Heart left ventricle (tissue), 16 donors: ENCODE measurements at regions of chr17 and their contacts with region 1.

Region 1: DNA sequence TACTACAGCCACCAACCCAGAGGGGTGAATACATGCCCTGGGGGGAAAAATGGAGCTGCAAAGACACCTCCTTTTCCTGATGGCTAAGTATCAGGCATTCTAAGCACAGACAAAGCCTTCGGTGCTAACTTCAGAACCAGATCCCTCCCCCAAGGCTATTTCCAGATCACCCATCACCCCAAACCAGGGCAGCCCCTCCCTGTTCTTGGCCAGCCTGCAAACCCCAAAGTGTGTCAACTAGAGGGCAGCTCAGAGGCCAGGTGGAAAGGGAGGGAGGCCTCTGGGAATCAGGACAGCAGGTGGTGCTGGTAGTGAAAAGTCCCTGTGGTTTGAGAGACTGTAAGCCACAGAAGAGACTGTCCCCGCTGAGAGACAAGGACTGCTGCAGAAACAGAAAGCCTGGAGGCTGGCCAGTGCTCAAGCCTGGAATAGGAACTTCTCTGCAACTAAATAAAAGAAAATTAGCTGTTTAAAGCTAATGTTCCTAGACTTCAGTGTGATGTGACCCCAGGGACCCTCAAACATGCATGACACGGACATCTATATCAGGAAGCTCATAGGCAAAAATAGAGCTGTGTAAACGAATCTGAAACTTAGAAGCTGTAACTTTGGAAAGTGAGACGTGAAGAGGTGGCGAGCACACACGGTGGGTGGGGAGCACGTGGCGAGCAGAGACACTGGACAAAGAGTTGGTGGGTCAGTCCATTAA is 9.1 kb downstream of the TUBG1 start:
- DNase-seq: peak; percentile 64 to 82 (median 69)
- ATAC-seq: peak; percentile 94 to 97 (median 96)
- H3K4me3 ChIP-seq: peak overlapping the region in 5 of 12 donors; percentile 3 to 23 (median 3)
- H3K27ac ChIP-seq: peak overlapping the region in 11 of 12 donors; percentile 5 to 83 (median 69)
- H3K4me1 ChIP-seq: peaks cover 0 to 22% (median 10%) of the 10 kb centered on the region in 12 donors
- H3K27me3 ChIP-seq: no peaks in the 10 kb centered on the region
- CTCF ChIP-seq: peak in 8 of 12 donors; percentile 23 to 59 (median 35)
- POLR2A ChIP-seq: no peak

Region 2: DNA sequence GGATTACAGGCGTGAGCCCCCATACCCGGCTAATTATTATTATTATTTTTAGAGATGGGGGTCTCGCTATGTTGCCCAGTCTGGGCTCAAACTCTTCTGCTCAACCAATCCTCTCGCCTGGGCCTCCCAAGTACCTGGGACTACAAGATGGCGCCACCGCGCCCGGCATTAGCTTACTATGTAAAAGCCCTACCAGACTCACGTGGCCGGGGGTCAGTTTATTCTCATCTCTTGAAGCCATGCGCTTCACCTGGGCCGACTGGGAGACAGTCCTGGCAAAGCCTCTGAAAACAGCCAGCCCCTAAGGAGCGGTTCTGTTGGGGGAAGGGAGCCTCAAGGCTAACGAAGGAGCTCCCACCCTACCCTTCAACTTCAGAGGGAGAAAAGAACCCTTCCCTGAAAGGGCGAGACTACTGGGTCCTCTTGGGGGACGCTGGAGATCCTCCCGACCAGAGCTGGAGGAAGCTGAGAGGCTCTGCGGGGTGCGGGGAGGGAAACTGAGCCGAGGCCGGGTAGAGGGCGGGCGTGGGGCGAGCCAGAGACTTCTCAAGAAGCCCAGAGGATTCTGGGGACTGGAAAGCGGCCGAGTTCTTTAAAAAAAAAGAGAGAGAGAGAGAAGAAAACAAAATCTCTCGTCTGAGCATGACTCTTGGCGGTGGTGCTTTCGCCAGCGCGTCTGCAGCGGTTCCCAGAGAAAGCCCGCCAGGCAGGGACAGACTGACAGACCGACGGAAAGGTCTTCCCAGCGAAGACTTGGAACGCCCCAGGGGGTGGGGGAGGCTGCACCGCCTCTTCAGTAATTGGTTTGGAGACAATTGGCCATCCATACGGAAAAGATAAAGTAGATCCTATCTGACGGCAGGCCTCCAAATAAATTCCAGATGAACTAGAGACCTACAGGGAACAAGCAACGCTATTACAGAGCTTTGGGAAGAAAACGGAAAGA is 34.9 kb after region 1 on chr17:
- intact Hi-C with region 1: loop called in 6 of 10 experiments (anchors 5 kb)
- DNase-seq: peak; percentile 61 to 81 (median 72)
- ATAC-seq: peak; percentile 57 to 83 (median 80)
- H3K4me3 ChIP-seq: peak overlapping the region in 11 of 12 donors; percentile 17 to 60 (median 47)
- H3K27ac ChIP-seq: peak overlapping the region; percentile 36 to 90 (median 74)
- H3K4me1 ChIP-seq: peaks cover 0 to 17% (median 10%) of the 10 kb centered on the region in 12 donors
- H3K27me3 ChIP-seq: peaks cover 0 to 8% (median 0%) of the 10 kb centered on the region in 9 donors
- CTCF ChIP-seq: no peak
- POLR2A ChIP-seq: no peak

Region 3: GRCh38 chr17:42659079-42659931 is 40.7 kb after region 1 on chr17 and contains the start of gene TUBG2:
- intact Hi-C with region 1: loop called in 6 of 10 experiments (anchors 5 kb)
- DNase-seq: peak; percentile 89 to 94 (median 92)
- ATAC-seq: peak; percentile 89 to 97 (median 95)
- H3K4me3 ChIP-seq: peak within 1 kb of the TSS; percentile 54 to 94 (median 74)
- H3K27ac ChIP-seq: peak within 1 kb of the TSS in 11 of 12 donors; percentile 65 to 88 (median 80)
- H3K4me1 ChIP-seq: peaks cover 0 to 26% (median 9%) of the 10 kb centered on the region in 12 donors
- H3K27me3 ChIP-seq: no peaks in the 10 kb centered on the region
- CTCF ChIP-seq: peak in 1 of 12 donors; percentile 10
- POLR2A ChIP-seq: peak in 1 of 2 donors; percentile 77
- total RNA-seq, gene TUBG2: 11.0 to 28.2 (median 16.7) TPM

Region 4: GRCh38 chr17:42677008-42677857 is 58.6 kb after region 1 on chr17:
- intact Hi-C with region 1: loop called in 3 of 10 experiments (anchors 2 to 10 kb)
- DNase-seq: peak; percentile 100
- ATAC-seq: peak; percentile 70 to 87 (median 82)
- H3K4me3 ChIP-seq: peak overlapping the region; percentile 79 to 97 (median 92)
- H3K27ac ChIP-seq: peak overlapping the region; percentile 66 to 99 (median 96)
- H3K4me1 ChIP-seq: peaks cover 2 to 81% (median 65%) of the 10 kb centered on the region in 12 donors
- H3K27me3 ChIP-seq: peaks cover 0 to 35% (median 0%) of the 10 kb centered on the region in 9 donors
- CTCF ChIP-seq: no peak
- POLR2A ChIP-seq: no peak

Region 5: GRCh38 chr17:42725143-42725542 is 106.5 kb after region 1 on chr17:
- intact Hi-C with region 1: no loop called
- DNase-seq: no peak
- ATAC-seq: no peak
- H3K4me3 ChIP-seq: no peak overlapping the region
- H3K27ac ChIP-seq: no peak overlapping the region
- H3K4me1 ChIP-seq: peaks cover 0 to 3% (median 0%) of the 10 kb centered on the region in 12 donors
- H3K27me3 ChIP-seq: no peaks in the 10 kb centered on the region
- CTCF ChIP-seq: no peak
- POLR2A ChIP-seq: no peak